Right lobe of liver (tissue), 6 donors: ENCODE measurements at regions of chr3 and their contacts with region 1.

Region 1: DNA sequence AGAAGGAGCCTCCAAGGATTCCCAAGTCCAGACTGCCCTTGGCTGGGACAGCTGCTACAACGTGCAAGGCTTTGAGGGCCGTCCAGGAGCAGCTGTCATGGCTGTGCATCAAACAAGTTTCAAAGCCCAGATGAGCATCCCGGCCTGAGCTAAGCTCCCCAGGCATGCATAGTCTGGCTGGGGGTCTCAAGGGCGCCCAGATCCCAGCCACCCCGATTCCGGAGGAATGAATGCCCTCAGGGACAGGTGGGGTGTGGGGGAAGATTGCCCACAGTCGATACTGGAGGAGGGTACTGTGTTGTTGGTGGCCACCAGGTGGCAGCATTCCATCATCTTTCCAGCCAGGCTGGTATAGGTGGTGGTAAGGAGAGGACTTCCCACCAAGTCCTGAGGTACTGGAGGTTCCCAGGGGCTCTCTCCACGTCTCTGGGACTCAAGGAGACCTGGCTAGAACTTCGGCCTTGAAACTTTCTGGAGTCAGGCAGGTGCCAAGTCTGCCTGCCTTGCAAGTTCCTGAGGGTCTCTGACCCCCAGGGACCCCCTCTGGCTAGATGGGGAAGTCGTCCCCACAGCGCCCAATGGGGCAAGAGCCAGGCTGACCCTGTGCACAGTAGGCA is 32.8 kb downstream of the RBM5 start:
- DNase-seq: peak; percentile 73 to 80 (median 74)
- ATAC-seq: peak; percentile 82 to 86 (median 84)
- H3K4me3 ChIP-seq: no peak overlapping the region
- H3K27ac ChIP-seq: no peak overlapping the region
- H3K4me1 ChIP-seq: no peaks in the 10 kb centered on the region
- H3K27me3 ChIP-seq: no peaks in the 10 kb centered on the region
- CTCF ChIP-seq: peak; percentile 79 to 88 (median 84)
- POLR2A ChIP-seq: no peak

Region 2: DNA sequence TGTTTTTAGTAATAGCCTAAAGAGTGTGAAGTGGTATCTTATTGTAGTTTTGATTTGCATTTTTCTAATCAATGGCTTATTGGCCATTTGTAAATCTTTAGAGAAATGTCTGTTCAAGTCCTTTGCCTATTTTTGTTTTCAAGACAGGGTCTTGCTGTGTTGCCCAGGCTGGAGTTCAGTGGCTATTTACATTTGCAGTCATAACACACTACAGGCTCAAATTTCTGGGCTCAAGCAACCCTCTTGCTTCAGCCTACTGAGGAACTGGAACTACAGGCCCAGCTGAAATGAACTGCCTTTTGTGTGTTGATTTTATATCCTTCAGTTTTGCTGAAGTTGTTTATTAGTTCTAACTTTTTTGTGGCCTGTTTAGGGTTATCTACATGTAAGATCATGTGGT is 539.3 kb before region 1 on chr3:
- intact Hi-C with region 1: no loop called
- DNase-seq: no peak
- ATAC-seq: no peak
- H3K4me3 ChIP-seq: no peak overlapping the region
- H3K27ac ChIP-seq: no peak overlapping the region
- H3K4me1 ChIP-seq: no peaks in the 10 kb centered on the region
- H3K27me3 ChIP-seq: no peaks in the 10 kb centered on the region
- CTCF ChIP-seq: no peak
- POLR2A ChIP-seq: no peak

Region 3: DNA sequence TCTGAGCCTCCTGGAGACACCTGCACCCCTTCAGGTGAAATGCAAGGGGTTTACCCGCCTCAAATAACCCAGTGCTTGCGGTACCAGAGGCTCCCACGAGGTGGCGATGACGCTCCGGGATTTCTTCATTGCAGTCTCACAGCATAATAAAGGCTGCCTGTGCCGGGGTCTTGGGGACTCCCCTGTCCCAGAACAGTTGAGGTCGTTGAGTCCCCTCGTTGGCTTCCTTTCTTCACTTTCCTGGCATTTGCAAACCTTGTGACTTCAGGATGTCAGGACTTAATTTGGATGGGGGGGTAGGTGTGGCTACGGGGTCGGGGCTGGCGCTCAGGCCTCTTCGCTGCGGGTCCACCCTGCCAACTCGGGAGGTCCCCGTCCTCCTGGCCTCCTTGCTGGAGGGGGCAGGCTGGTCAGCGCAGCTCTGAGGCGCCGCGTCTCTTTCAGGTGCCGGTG is 71.2 kb after region 1 on chr3:
- intact Hi-C with region 1: loop called (anchors 2 kb)
- DNase-seq: peak in 1 of 3 donors; percentile 53
- ATAC-seq: peak in 1 of 4 donors; percentile 7
- H3K4me3 ChIP-seq: no peak overlapping the region
- H3K27ac ChIP-seq: no peak overlapping the region
- H3K4me1 ChIP-seq: peaks cover 0 to 44% (median 12%) of the 10 kb centered on the region in 4 donors
- H3K27me3 ChIP-seq: no peaks in the 10 kb centered on the region
- CTCF ChIP-seq: peak; percentile 86 to 91 (median 88)
- POLR2A ChIP-seq: no peak

Region 4: DNA sequence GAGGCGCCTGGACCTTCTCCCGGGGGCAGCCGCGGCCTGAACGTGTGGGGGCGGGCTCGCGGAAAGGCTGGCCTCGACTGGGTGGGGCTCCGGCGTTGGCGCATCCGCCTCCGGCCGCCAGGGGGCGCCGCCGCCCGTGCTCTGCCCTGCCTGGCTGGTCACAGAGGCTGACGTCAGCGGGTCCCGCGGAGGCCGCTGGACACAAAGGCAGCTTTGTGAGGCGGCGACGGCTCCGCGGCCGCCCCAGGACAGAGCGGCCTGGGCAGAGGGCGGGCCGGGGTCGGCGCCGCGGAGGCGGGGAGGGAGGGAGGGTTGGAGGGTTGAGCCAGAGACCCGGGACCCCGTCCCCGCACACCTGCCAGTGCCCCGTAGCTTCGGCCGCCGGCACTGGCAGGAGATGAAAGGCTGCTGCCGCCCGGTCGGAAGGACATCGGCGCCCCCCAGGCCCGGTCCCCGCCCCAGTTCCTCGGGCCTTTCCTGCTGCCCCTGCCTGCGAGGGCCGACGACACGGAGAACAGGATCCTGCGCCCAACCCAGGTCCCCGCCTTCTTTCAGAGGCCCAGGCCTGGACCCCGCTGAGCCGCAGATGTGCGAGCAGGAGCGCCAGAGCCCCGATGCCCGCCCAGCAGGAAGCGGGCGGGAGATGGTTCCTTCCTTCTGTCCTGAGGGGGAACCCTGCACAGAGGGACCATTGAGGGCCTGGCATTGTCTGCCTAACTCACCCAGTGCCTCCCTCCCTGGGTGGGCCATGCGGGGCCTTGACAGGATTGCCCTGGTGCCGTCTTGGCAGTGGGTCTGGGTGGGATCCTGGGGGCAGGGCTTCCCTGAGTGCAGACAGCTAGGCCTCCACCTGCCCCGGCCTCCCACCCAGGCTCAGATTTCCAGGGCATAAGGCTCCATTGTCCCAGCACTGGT is 138.8 kb after region 1 on chr3:
- intact Hi-C with region 1: loop called in 1 of 2 experiments (anchors 10 kb)
- DNase-seq: peak; percentile 94 to 96 (median 95)
- ATAC-seq: peak; percentile 83 to 96 (median 90)
- H3K4me3 ChIP-seq: peak overlapping the region; percentile 52 to 60 (median 56)
- H3K27ac ChIP-seq: peak overlapping the region; percentile 91 to 95 (median 95)
- H3K4me1 ChIP-seq: peaks cover 0 to 13% (median 2%) of the 10 kb centered on the region in 4 donors
- H3K27me3 ChIP-seq: no peaks in the 10 kb centered on the region
- CTCF ChIP-seq: peak; percentile 97 to 99 (median 98)
- POLR2A ChIP-seq: peak; percentile 69